Sigmoid colon (tissue), 7 donors: ENCODE measurements at regions of chr18 and their contacts with region 1.

Region 1: GRCh38 chr18:76982841-76983587 is 149.6 kb downstream of the MBP start:
- DNase-seq: peak; percentile 86
- H3K4me3 ChIP-seq: no peak overlapping the region
- H3K27ac ChIP-seq: no peak overlapping the region
- H3K4me1 ChIP-seq: peaks cover 0 to 6% (median 3%) of the 10 kb centered on the region in 4 donors
- H3K27me3 ChIP-seq: no peaks in the 10 kb centered on the region
- CTCF ChIP-seq: peak; percentile 53 to 93 (median 82)
- EP300 ChIP-seq: no peak
- POLR2A ChIP-seq: no peak

Region 2: GRCh38 chr18:76803814-76804213 is 179.2 kb before region 1 on chr18:
- intact Hi-C with region 1: loop called (anchors 1 kb)
- DNase-seq: peak; percentile 77
- H3K4me3 ChIP-seq: no peak overlapping the region
- H3K27ac ChIP-seq: no peak overlapping the region
- H3K4me1 ChIP-seq: peaks cover 0 to 15% (median 13%) of the 10 kb centered on the region in 4 donors
- H3K27me3 ChIP-seq: peaks cover 0 to 4% (median 0%) of the 10 kb centered on the region in 3 donors
- CTCF ChIP-seq: peak; percentile 44 to 82 (median 71)
- EP300 ChIP-seq: no peak
- POLR2A ChIP-seq: no peak

Region 3: GRCh38 chr18:76875390-76876325 is 107.4 kb before region 1 on chr18:
- intact Hi-C with region 1: loop called (anchors 5 kb)
- DNase-seq: no peak
- H3K4me3 ChIP-seq: no peak overlapping the region
- H3K27ac ChIP-seq: no peak overlapping the region
- H3K4me1 ChIP-seq: no peaks in the 10 kb centered on the region
- H3K27me3 ChIP-seq: no peaks in the 10 kb centered on the region
- CTCF ChIP-seq: peak; percentile 28 to 65 (median 44)
- EP300 ChIP-seq: no peak
- POLR2A ChIP-seq: no peak

Region 4: DNA sequence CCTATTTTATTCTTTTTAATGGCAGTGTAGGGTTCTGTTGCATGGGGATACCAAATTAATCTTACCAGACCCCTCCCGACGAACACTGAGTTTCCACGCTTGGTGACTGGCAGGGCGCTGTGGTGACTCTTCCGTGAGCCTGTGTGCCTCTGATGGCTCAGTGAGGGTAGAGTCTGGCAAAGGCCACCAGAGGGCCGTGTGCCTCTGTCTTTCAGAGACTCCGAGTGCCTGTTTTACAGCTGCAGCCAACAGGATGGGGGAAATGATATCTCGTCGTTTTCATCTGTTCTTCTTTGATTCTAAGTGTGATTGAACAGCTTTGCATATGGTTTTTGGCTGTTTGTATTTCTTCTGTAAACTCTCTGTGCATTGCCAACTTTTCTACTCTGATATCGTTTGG is 60.9 kb before region 1 on chr18:
- intact Hi-C with region 1: loop called (anchors 5 kb)
- DNase-seq: no peak
- H3K4me3 ChIP-seq: no peak overlapping the region
- H3K27ac ChIP-seq: no peak overlapping the region
- H3K4me1 ChIP-seq: peaks cover 0 to 3% (median 0%) of the 10 kb centered on the region in 4 donors
- H3K27me3 ChIP-seq: no peaks in the 10 kb centered on the region
- CTCF ChIP-seq: peak in 3 of 4 experiments; percentile 28 to 31 (median 29)
- EP300 ChIP-seq: no peak
- POLR2A ChIP-seq: no peak

Region 5: DNA sequence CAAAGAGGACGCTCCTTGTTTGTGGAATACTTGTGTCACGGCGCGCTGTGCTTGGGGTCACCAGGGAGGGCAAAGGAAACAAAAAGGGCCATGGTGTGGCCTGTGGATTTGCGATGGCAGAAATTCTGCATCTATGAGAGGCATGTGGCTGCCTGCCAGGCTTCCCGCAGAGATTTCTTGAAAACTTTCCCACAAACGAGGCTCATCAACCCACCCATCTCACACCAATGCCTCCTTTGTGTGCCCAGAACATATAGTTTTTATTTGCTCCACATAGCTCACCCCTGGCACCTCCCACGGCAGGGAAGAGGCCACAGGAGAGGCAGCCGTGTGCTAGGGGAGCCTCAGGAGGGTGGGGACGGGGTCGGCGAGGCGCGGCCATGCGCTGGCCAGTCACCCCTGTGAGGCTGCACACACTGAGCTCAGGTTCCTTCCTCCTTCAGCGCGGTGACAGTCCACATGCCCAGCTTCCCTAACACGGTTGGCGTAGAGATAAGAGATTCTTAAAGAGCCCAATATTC is 49.2 kb after region 1 on chr18:
- intact Hi-C with region 1: no loop called
- DNase-seq: no peak
- H3K4me3 ChIP-seq: no peak overlapping the region
- H3K27ac ChIP-seq: no peak overlapping the region
- H3K4me1 ChIP-seq: peaks cover 0 to 8% (median 0%) of the 10 kb centered on the region in 4 donors
- H3K27me3 ChIP-seq: no peaks in the 10 kb centered on the region
- CTCF ChIP-seq: no peak
- EP300 ChIP-seq: no peak
- POLR2A ChIP-seq: no peak